Calu3 (cell line): ENCODE measurements at regions of chr19 and their contacts with region 1.

Region 1: GRCh38 chr19:40570313-40571004 is 6.2 kb upstream of the SHKBP1 start:
- DNase-seq: peak; percentile 100
- H3K4me3 Mint-ChIP-seq: peak overlapping the region; percentile 42
- H3K27ac Mint-ChIP-seq: peak overlapping the region; percentile 77
- H3K4me1 Mint-ChIP-seq: peaks cover 18% of the 10 kb centered on the region
- H3K27me3 Mint-ChIP-seq: peaks cover 55% of the 10 kb centered on the region
- CTCF ChIP-seq: no peak

Region 2: DNA sequence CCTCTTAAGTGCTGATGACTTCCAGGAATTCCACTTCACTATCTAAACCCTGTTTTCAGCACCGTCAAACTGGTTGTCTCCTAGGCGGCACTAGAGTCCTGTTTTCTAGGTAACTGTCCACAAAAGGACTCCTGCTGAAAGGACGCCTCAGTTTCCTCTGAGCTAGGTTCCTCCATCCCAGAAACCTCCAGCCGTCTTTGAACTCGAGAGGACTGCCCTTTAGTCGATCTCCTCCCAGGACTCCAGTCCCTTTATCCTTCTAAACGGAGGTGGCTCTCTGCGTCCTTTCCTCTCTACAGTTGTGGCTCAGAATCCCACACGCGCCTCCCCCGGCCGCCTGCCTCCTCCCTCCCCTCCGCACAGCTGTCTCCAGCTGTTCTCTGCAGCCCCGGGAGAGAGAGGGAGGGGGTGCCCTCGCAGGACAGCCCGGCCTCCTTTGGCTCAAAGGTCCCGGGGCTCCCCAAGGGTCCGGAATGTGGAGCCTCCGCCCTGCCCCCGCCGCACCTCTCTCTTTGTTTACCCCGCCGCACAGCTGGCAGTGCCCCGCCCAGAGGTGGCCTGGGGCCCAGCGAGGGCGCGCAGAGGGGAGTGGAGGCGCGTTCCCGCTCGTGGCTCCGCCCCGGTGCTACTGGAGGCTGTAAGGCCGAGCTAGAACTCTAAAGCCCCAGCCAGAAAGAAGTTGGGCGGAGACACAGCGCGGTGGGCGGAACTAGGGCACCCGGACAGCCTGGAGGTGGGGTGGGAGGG is 33.1 kb after region 1 on chr19:
- CTCF ChIA-PET with region 1: interaction called, 10 read pairs
- intact Hi-C with region 1: no loop called
- DNase-seq: peak; percentile 99
- H3K4me3 Mint-ChIP-seq: peak overlapping the region; percentile 69
- H3K27ac Mint-ChIP-seq: peak overlapping the region; percentile 62
- H3K4me1 Mint-ChIP-seq: peaks cover 77% of the 10 kb centered on the region
- H3K27me3 Mint-ChIP-seq: peaks cover 60% of the 10 kb centered on the region
- CTCF ChIP-seq: no peak